Activated T-helper 1 cell treated with anti-CD3 and anti-CD28 coated beads, Interleukin-12 subunit alpha, Interleukin-12 subunit beta, Interleukin-2, Interleukin-4 antibody, amounts not matched to agents 30 ng/mL and 10 ng/mL and 1 ng/mL, durations not matched to agents 14 hours and 24 hours and 36 hours (primary cell): ENCODE measurements at regions of chr7 and their contacts with region 1.

Region 1: DNA sequence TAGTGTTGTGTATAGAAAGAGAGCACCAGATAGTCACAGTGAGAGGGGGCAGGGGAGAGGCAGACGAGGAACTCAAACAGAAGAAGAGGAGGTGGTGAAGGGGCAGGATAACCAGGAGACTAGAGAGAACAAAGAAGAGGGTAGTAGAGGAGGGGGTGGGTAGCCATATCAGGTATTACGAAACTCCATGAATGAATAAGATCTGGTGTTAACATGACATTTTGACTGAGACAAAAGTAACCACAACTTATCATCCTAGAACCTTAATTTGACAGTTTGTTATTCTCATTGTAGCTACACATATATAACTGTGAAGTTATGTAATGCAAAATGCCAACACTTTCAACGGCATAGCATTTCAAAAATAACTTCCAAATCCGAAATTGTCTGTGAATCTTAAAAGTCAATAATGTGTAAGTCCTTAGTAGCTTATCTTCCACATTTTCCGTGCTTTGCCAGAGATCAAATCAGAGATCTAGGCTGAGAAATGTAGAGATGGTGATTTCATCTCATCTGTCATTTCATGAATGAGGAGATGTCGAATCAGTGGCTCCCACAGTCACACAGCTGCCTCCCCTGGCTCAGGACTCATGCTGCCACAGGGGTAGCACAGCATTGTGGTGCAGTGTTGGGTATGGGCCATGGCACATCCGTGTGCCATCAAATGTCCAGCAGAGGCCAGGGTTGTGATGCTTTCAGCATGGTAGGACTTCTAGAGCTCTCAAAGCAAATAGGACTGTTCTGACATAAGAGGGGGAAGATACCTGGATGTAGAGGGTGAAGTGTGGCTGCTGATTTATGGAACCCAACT is 202.1 kb downstream of the HECW1 start:
- DNase-seq: no peak
- H3K4me3 Mint-ChIP-seq: no peak overlapping the region
- H3K27ac Mint-ChIP-seq: peak overlapping the region; percentile 51
- H3K4me1 Mint-ChIP-seq: peaks cover 14% of the 10 kb centered on the region
- H3K27me3 Mint-ChIP-seq: no peaks in the 10 kb centered on the region

Region 2: DNA sequence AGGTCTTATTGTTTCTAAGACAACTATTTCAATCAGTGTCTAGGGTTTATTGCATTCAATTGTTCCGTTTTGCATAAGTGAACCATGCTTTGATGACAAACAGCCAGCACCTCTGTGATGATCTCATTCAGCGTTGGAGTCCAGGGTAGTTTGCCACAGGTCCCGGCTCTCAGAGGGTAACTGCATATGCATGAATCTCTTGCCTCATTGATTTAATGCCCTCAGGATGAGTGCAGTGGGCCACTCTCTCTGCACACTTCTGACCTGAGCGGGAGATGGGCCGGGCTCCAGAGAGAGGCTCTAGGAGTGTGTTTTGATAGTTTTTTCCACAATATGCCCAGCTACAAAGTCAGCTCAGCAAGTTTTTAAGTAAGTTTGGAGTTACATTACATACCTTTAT is 118.2 kb before region 1 on chr7:
- intact Hi-C with region 1: no loop called
- DNase-seq: no peak
- H3K4me3 Mint-ChIP-seq: no peak overlapping the region
- H3K27ac Mint-ChIP-seq: no peak overlapping the region
- H3K4me1 Mint-ChIP-seq: no peaks in the 10 kb centered on the region
- H3K27me3 Mint-ChIP-seq: peaks cover 2% of the 10 kb centered on the region

Region 3: DNA sequence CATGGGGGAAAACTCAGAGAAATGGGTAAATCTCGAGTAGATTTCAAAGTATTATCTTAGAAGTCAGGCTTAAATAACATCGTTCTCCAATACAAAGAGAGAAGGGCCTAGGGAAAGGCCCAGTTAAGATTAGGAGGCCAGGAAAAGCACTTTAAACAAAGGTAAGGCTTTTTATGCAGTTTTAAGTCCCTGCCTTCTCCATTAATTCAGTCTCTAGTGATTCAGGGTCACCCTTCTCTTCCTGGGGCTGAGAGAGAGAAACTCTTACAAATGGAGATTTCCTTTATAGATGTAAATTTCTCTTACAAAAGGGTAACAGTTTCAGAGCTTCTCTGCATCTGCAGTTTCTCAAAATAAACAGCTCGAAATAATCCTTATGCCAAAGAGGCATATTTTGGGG is 22.8 kb before region 1 on chr7:
- intact Hi-C with region 1: no loop called
- DNase-seq: no peak
- H3K4me3 Mint-ChIP-seq: no peak overlapping the region
- H3K27ac Mint-ChIP-seq: no peak overlapping the region
- H3K4me1 Mint-ChIP-seq: no peaks in the 10 kb centered on the region
- H3K27me3 Mint-ChIP-seq: peaks cover 6% of the 10 kb centered on the region

Region 4: GRCh38 chr7:43302211-43302711 is 12.3 kb before region 1 on chr7:
- intact Hi-C with region 1: loop called (anchors 1 kb)
- DNase-seq: no peak
- H3K4me3 Mint-ChIP-seq: no peak overlapping the region
- H3K27ac Mint-ChIP-seq: no peak overlapping the region
- H3K4me1 Mint-ChIP-seq: peaks cover 23% of the 10 kb centered on the region
- H3K27me3 Mint-ChIP-seq: peaks cover 7% of the 10 kb centered on the region